Activated CD4-positive, alpha-beta T cell treated with anti-CD3 and anti-CD28 coated beads, Interleukin-2, amount 10 ng/mL, durations not matched to agents 24 days and 14 days (primary cell): ENCODE measurements at regions of chr14 and their contacts with region 1.

Region 1: GRCh38 chr14:105020815-105021655 is at the start of gene CDCA4:
- DNase-seq: peak; percentile 99
- H3K4me3 Mint-ChIP-seq: peak within 1 kb of the TSS; percentile 100
- H3K27ac Mint-ChIP-seq: peak within 1 kb of the TSS; percentile 95
- H3K4me1 Mint-ChIP-seq: peaks cover 55% of the 10 kb centered on the region
- H3K27me3 Mint-ChIP-seq: no peaks in the 10 kb centered on the region
- total RNA-seq, gene CDCA4: 64.6 and 66.3 TPM in 2 replicates

Region 2: DNA sequence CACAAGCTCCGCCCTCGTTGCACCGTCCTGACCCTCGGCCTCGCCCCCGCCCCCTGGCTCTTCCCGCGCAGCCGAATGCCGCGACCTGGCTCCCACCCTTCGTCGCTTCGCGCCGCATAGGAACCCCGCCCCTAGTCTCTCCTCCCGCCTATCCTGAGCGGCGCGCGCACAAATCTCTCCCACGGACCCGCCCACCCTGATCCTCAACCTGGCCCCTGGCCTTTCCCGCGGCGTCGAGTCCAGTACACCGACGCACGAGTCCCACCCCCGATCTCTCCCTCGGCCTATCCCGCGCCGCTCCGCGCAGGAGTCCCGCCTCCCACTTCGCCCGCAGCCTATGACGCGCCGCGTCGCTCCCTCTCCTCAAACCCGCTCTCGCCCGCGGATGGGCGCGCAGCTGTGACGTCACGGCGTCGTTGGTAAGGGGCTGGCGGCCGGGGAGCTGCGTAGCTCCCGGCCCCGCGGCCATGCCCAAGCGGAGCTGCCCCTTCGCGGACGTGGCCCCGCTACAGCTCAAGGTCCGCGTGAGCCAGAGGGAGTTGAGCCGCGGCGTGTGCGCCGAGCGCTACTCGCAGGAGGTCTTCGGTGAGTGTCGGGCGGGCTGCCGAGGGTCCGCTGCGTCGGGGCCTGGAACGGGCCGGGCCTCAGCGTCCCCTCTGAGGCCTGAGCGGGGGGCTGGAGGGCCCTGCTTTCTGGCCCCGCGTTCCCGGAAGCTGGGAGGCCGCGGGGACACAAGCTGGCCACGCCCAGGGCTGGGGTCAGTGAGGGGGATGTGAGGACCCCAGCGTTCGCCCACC is 268.1 kb before region 1 on chr14 and contains the start of gene SIVA1:
- intact Hi-C with region 1: loop called (anchors 2 kb)
- DNase-seq: peak; percentile 100
- H3K4me3 Mint-ChIP-seq: peak within 1 kb of the TSS; percentile 93
- H3K27ac Mint-ChIP-seq: peak within 1 kb of the TSS; percentile 94
- H3K4me1 Mint-ChIP-seq: peaks cover 35% of the 10 kb centered on the region
- H3K27me3 Mint-ChIP-seq: peaks cover 1% of the 10 kb centered on the region
- total RNA-seq, gene SIVA1: 117 and 123 TPM in 2 replicates

Region 3: GRCh38 chr14:104985675-104986525 is 35.1 kb before region 1 on chr14 and contains the start of gene CLBA1:
- intact Hi-C with region 1: loop called (anchors 1 kb)
- DNase-seq: peak; percentile 97
- H3K4me3 Mint-ChIP-seq: peak within 1 kb of the TSS; percentile 75
- H3K27ac Mint-ChIP-seq: peak within 1 kb of the TSS; percentile 75
- H3K4me1 Mint-ChIP-seq: peaks cover 5% of the 10 kb centered on the region
- H3K27me3 Mint-ChIP-seq: peaks cover 3% of the 10 kb centered on the region
- total RNA-seq, gene CLBA1: 2.4 and 2.5 TPM in 2 replicates

Region 4: GRCh38 chr14:105065280-105066228 is 44.5 kb after region 1 on chr14 and contains the start of gene GPR132:
- intact Hi-C with region 1: loop called (anchors 1 kb)
- DNase-seq: peak; percentile 97
- H3K4me3 Mint-ChIP-seq: peak within 1 kb of the TSS; percentile 92
- H3K27ac Mint-ChIP-seq: peak within 1 kb of the TSS; percentile 90
- H3K4me1 Mint-ChIP-seq: peaks cover 59% of the 10 kb centered on the region
- H3K27me3 Mint-ChIP-seq: no peaks in the 10 kb centered on the region
- total RNA-seq, gene GPR132: 25.8 and 31.5 TPM in 2 replicates

Region 5: DNA sequence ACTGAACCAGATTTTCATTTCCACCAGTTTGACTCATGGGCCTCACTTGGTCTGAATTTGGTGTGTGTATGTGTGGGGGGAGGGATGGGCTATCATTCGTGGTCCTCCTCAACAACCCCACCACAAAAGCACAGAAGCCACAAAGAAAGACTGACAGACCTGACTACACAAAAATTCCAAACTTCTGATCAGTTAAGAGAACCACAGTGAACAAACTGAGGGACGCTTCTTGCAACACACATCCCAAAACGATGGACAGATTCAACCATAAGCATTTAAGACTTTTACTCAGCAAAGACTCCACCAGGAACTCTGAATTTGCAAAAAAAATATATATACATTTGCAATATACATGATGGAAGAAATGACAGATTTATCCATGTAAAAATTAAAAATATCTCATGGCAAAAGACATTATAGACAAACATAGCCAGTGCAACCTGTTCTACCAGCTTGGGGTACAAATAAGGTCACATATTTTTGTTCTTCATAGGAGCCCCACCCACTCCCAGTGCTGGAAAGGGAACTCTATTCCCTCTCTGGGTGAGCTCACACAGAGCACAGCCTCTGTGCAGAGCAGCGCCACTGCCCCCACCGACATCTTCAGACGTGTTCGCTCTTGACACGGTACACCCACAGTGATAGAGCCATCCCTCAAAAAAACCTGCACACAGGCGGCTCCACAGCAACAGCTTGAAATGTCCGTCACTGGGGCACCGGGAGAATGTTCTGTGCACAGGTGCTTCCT is 97.8 kb after region 1 on chr14:
- intact Hi-C with region 1: no loop called
- DNase-seq: no peak
- H3K4me3 Mint-ChIP-seq: no peak overlapping the region
- H3K27ac Mint-ChIP-seq: no peak overlapping the region
- H3K4me1 Mint-ChIP-seq: no peaks in the 10 kb centered on the region
- H3K27me3 Mint-ChIP-seq: peaks cover 8% of the 10 kb centered on the region

Region 6: GRCh38 chr14:105300792-105301533 is 279.9 kb after region 1 on chr14 and contains the start of gene BRF1:
- intact Hi-C with region 1: loop called (anchors 2 kb)
- DNase-seq: peak; percentile 99
- H3K4me3 Mint-ChIP-seq: peak within 1 kb of the TSS; percentile 91
- H3K27ac Mint-ChIP-seq: peak within 1 kb of the TSS; percentile 94
- H3K4me1 Mint-ChIP-seq: peaks cover 28% of the 10 kb centered on the region
- H3K27me3 Mint-ChIP-seq: no peaks in the 10 kb centered on the region
- total RNA-seq, gene BRF1: 42.4 and 46.6 TPM in 2 replicates